ENCODE measurements at regions of chr15 and their contacts with region 1.

Region 1: DNA sequence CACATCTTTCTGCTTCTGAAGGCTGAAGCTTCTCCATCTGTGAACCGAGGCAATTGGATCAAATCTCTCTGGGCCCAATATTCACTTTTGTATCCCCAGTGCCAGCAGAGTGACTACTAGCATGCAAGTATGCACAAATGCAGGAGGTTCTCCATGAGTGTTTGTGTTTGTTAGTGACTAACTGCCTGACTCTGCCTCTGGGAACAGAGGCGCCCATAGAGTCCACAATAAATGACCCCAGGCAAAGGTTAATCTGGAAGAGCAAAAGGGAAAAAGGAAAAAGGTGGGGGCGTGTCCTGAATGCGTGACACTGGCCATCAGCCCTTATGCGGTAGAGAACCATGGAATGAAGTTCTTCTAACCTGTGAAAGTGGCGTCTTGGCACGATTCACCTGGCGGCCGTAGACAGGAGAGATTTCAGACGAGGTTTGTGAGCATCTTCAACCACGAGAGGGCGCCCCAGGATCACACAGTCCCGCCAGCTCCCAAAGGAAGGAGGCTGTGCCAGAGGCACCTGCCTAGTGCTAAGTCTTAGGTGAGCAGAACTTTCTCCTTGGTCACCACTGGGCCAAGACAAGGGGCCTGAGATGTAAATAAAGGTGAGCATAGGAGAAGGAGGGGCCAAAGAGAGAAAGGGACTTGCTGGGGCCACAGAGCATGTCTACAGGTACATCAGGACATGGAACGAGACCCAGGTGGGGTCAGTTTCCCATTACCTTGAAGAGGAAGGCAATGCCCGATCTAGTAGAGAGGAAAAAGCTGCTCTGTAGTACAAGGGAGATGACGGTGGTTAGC is 44.2 kb downstream of the RBPMS2 start:
- DNase-seq: peak; percentile 83
- CTCF ChIP-seq: peak; percentile 76

Region 2: GRCh38 chr15:64324165-64324877 is 406.9 kb before region 1 on chr15:
- in situ Hi-C with region 1: no loop called
- DNase-seq: no peak
- CTCF ChIP-seq: no peak

Region 3: GRCh38 chr15:64398575-64398974 is 332.6 kb before region 1 on chr15:
- in situ Hi-C with region 1: no loop called
- DNase-seq: no peak
- CTCF ChIP-seq: no peak

Region 4: GRCh38 chr15:64438653-64439447 is 292.4 kb before region 1 on chr15:
- in situ Hi-C with region 1: no loop called
- DNase-seq: no peak
- CTCF ChIP-seq: no peak

Region 5: GRCh38 chr15:64905119-64905831 is 174.1 kb after region 1 on chr15:
- in situ Hi-C with region 1: loop called (anchors 10 kb)
- DNase-seq: peak; percentile 87
- CTCF ChIP-seq: peak; percentile 76

Measured in GM13976 (cell line).